Activated CD4-positive, alpha-beta T cell treated with anti-CD3 and anti-CD28 coated beads, Interleukin-2, amount 10 ng/mL, durations not matched to agents 24 days and 14 days (primary cell): ENCODE measurements at regions of chr20 and their contacts with region 1.

Region 1: DNA sequence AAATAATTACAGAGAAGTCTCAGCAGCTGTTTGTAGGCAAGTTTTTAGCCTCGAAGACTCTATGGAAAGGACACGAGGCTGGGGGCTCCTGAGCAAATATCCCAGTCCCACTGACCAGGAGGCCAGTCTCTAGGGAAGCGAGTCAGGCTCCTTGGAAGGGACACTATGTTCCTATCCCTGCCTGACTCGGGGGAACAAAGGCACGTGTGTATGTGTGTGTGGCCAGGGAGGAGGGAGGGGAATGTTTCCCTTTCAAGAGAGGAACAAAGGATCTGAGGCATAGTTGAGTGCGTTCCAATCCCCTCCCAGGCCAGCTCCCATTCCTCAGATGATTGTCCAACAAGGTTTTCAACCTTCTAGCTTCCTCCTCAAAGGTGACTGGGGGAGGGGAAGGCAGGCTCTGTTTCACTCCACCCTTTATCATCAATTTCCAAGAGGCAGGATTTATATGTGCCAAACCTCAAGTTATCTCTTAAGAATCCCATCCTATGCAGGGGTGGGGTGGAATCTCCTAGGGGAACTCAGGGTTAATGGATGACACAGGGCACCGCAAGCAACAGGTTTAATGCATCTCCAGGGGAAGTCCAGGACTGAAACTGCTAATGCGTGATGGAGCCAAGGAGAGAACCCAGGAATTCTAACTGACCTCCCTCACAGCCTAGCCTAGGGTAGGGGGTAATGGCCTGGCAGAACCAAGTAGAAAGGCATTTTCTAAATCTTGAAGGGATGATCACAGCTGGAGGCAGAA is 9.9 kb downstream of the BCL2L1 start:
- DNase-seq: no peak
- H3K4me3 Mint-ChIP-seq: peak overlapping the region; percentile 98
- H3K27ac Mint-ChIP-seq: peak overlapping the region; percentile 63
- H3K4me1 Mint-ChIP-seq: peaks cover 78% of the 10 kb centered on the region
- H3K27me3 Mint-ChIP-seq: no peaks in the 10 kb centered on the region

Region 2: DNA sequence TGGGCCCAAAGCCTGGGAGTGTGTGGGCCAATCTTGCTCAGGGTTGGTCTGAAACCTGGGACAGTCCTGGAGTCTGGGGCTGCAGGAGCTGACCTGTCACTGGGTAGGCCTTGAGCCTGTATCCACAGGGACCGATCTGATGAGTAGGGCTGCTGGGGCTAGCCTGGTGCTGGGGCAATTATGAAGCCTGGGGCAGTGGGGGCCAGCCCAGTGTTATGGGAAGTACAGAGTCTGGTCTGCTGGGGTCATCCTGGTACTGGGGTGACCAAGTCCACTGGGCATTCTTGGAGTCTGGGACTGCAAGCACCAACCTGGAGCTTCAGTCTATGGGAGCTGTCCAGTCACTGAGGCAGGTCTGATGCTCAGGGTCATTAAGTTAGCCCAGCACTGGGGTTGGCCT is 434.6 kb before region 1 on chr20:
- intact Hi-C with region 1: no loop called
- DNase-seq: no peak
- H3K4me3 Mint-ChIP-seq: no peak overlapping the region
- H3K27ac Mint-ChIP-seq: no peak overlapping the region
- H3K4me1 Mint-ChIP-seq: no peaks in the 10 kb centered on the region
- H3K27me3 Mint-ChIP-seq: no peaks in the 10 kb centered on the region

Region 3: GRCh38 chr20:31605031-31605901 is 107.5 kb before region 1 on chr20 and contains the start of gene ID1:
- intact Hi-C with region 1: no loop called
- DNase-seq: peak; percentile 97
- H3K4me3 Mint-ChIP-seq: peak within 1 kb of the TSS; percentile 98
- H3K27ac Mint-ChIP-seq: peak within 1 kb of the TSS; percentile 30
- H3K4me1 Mint-ChIP-seq: peaks cover 26% of the 10 kb centered on the region
- H3K27me3 Mint-ChIP-seq: peaks cover 52% of the 10 kb centered on the region
- total RNA-seq, gene ID1: 2.7 and 2.9 TPM in 2 replicates

Region 4: GRCh38 chr20:31698803-31699718 is 13.7 kb before region 1 on chr20:
- intact Hi-C with region 1: loop called (anchors 1 kb)
- DNase-seq: peak; percentile 81
- H3K4me3 Mint-ChIP-seq: peak overlapping the region; percentile 76
- H3K27ac Mint-ChIP-seq: peak overlapping the region; percentile 84
- H3K4me1 Mint-ChIP-seq: peaks cover 64% of the 10 kb centered on the region
- H3K27me3 Mint-ChIP-seq: no peaks in the 10 kb centered on the region